ENCODE measurements at regions of chr16 and their contacts with region 1.

Region 1: DNA sequence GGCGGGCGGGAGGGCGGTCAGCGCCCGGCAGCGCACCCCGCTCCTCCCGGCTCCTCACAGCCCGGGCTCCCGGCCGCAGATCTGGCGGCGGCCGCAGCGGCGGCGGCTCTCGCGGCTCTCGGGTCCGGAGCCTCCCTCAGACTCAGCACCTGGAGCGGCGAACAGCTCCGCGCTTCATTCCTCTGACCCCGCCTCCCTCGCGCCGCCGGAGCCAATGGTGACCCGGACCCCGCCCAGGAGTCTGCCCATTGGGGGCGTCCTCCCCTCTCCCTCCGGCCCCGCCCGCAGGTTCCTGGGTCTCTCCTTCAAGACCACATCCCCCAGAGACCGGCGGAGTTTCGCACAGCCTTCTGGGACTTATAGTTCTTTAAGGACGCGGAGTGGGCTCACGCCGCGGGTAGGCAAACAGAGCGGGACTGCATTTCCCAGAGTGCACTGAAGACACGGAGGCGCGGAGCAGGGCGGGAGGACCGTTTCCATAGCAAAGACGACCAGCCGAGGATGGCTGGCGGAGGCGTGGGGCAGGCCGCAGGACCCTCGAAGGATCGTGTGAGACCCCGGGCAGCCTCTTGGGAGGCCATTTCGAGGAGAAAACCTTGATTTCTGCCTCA is at the start of gene SMPD3:
- DNase-seq: peak; percentile 95
- ATAC-seq: peak; percentile 98
- H3K4me3 Mint-ChIP-seq: peak within 1 kb of the TSS; percentile 61
- H3K27ac Mint-ChIP-seq: peak within 1 kb of the TSS; percentile 7
- H3K4me1 Mint-ChIP-seq: peaks cover 23% of the 10 kb centered on the region
- H3K27me3 Mint-ChIP-seq: peaks cover 12% of the 10 kb centered on the region
- CTCF ChIP-seq: no peak
- total RNA-seq, gene SMPD3: 0.35 and 0.76 TPM in 2 replicates

Region 2: DNA sequence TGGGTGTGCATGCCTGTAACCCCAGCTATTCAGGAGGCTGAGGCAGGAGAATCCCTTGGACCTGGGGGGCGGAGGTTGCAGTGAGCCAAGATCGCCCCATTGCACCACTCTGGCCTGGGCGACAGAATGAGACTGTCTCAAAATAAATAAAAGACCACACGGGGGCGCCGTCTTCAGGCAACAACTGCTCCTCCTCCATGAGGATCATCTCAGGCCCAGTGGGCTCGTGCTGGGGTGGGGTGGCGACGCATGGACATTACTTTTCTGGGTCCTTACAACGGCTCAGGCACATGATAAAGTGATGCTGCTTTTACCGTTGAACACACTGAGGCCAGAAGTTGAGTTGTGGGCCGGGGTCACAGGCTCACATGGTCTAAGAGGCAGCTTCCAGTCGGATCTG is 81.4 kb before region 1 on chr16:
- CTCF ChIA-PET with region 1: no interaction called
- POLR2A ChIA-PET with region 1: no interaction called
- intact Hi-C with region 1: loop called (anchors 5 kb)
- DNase-seq: no peak
- ATAC-seq: no peak
- H3K4me3 Mint-ChIP-seq: no peak overlapping the region
- H3K27ac Mint-ChIP-seq: no peak overlapping the region
- H3K4me1 Mint-ChIP-seq: peaks cover 54% of the 10 kb centered on the region
- H3K27me3 Mint-ChIP-seq: no peaks in the 10 kb centered on the region
- CTCF ChIP-seq: no peak

Region 3: DNA sequence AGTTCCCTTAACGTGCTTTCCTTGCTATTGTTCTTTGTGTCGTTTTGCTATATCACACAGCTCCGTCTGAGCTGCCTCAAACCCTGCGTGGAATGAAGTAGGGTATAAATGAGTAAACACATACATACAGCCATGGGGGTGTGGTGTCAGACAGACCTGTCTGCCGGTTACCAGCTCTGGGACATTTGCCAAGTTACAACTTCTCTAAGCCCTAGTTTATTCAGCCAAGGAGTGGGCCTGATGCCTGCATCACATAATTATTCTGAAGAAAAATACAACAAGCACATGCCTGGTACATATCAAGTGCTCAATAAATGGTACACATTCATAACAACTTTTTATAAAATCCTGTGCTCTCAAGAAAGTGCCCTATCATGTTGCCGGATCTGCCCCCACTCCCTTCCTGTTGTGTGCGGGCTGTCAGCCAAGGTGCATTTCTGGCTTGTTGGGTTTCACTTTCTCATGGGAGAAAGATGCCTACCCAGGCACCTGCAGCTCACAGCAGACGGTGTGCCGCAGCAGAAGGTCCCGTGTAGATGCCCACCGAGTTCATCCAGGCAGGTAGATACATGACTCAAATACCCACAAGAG is 30.7 kb before region 1 on chr16:
- CTCF ChIA-PET with region 1: no interaction called
- POLR2A ChIA-PET with region 1: interaction called, 5 read pairs
- intact Hi-C with region 1: loop called (anchors 1 kb)
- DNase-seq: peak; percentile 29
- ATAC-seq: peak; percentile 85
- H3K4me3 Mint-ChIP-seq: peak overlapping the region; percentile 76
- H3K27ac Mint-ChIP-seq: peak overlapping the region; percentile 94
- H3K4me1 Mint-ChIP-seq: peaks cover 30% of the 10 kb centered on the region
- H3K27me3 Mint-ChIP-seq: no peaks in the 10 kb centered on the region
- CTCF ChIP-seq: no peak

Region 4: DNA sequence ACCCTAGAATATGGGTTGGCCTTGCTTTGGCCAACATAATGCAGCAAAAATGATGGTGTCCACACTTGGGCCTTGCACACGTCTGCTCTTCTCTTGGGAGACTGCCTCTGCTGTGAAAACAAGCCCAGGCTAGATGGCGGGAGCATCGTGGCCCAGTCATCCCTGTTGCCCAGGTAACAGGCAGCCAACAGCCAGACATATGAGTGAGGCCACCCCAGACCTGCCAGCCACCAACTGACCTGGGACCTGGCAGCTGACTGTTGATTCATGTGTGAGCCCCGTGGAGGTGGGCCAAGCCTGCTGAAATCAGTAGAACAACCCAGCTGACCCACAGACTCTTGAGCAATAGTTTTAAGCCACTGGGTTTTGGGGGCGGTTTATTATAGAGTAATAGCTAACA is 157.3 kb after region 1 on chr16:
- CTCF ChIA-PET with region 1: no interaction called
- POLR2A ChIA-PET with region 1: no interaction called
- intact Hi-C with region 1: no loop called
- DNase-seq: no peak
- ATAC-seq: no peak
- H3K4me3 Mint-ChIP-seq: no peak overlapping the region
- H3K27ac Mint-ChIP-seq: no peak overlapping the region
- H3K4me1 Mint-ChIP-seq: no peaks in the 10 kb centered on the region
- H3K27me3 Mint-ChIP-seq: no peaks in the 10 kb centered on the region
- CTCF ChIP-seq: no peak

Measured in activated B cell treated with CpG ODN at 0.5 μM for 24 hours (primary cell).